Astrocyte of the cerebellum (primary cell): ENCODE measurements at regions of chr19 and their contacts with region 1.

Region 1: DNA sequence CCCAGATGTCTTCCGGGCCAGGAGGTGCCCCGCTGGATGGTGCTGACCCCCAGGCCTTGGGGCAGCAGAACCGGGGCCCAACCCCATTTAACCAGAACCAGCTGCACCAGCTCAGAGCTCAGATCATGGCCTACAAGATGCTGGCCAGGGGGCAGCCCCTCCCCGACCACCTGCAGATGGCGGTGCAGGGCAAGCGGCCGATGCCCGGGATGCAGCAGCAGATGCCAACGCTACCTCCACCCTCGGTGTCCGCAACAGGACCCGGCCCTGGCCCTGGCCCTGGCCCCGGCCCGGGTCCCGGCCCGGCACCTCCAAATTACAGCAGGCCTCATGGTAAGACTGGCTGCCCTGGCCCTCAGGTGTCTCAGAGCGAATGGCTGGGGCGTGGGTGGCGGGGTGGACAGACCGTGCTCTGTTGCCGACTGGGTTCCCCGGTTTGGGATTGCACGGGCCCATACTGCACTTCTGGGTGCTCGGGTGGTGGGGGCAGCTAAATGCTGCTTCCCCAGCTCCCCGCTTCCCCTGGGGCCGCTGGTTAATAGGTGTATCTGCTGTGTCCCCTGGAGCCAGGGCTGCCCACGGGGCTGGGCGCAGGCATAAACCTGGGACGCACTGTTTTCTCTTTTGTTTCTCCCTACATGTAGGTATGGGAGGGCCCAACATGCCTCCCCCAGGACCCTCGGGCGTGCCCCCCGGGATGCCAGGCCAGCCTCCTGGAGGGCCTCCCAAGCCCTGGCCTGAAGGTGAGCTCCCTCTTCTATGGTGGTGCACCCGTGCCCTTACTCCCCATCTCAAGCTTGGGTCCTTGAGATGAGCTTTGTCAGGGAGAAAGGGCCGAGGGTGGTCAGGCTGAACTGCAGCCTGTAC is 25.7 kb downstream of the SMARCA4 start:
- DNase-seq: no peak
- H3K4me3 ChIP-seq: no peak overlapping the region
- CTCF ChIP-seq: no peak

Region 2: DNA sequence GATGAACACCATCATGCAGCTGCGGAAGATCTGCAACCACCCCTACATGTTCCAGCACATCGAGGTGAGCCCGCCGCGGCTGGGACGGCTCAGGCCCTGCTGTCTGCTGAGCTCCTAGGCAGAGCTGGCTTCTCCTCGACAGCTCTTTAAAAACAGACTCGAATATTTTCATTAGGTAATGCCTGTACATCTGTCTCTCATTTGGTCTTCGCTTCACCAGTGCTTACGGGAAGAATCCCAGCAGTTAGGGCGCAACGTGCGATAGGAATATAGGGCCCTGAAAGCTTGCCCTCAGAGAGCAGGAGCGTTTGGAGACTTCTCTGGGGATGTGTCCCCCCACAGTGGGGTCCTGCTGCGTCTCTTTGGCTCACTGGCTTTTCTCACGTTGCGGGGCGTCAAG is 39.0 kb after region 1 on chr19:
- in situ Hi-C with region 1: loop called (anchors 5 kb)
- DNase-seq: no peak
- H3K4me3 ChIP-seq: no peak overlapping the region
- CTCF ChIP-seq: no peak